A549 (cell line): ENCODE measurements at regions of chr1 and their contacts with region 1.

Region 1: GRCh38 chr1:44631647-44632539 is 42.4 kb downstream of the TMEM53 start:
- DNase-seq: peak; percentile 74 to 83
- ATAC-seq: peak; percentile 84 to 86
- H3K4me3 ChIP-seq: peak overlapping the region; percentile 77
- H3K27ac ChIP-seq: peak overlapping the region; percentile 97
- H3K4me1 ChIP-seq: peaks cover 18% of the 10 kb centered on the region; the same call in 1 of the 3 replicates
- CTCF ChIP-seq: no peak
- EP300 ChIP-seq: no peak
- POLR2A ChIP-seq: peak; percentile 30
- RAD21 ChIP-seq: no peak

Region 2: DNA sequence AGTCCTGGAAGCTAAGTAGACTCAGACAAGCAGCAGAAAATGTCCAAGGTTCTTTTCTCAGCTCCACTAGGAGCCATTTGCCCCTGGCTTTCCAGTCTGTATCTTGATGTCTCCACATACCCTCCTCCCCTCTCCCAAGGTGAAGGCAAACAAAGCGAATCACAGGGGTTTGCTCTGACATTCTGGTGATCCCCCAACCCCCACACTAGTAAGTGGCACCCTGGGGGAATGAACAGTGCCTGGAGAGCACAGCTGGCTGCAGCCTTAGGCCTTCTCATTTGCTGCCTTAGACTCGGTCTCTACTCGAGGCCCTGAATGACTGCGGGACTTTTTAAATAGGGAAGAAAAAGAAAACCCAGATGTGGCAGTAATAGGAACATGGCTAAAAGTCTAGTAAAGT is 292.2 kb before region 1 on chr1:
- CTCF ChIA-PET with region 1: no interaction called
- POLR2A ChIA-PET with region 1: interaction called, 16 read pairs
- DNase-seq: no peak
- ATAC-seq: no peak
- H3K4me3 ChIP-seq: no peak overlapping the region
- H3K27ac ChIP-seq: no peak overlapping the region
- H3K4me1 ChIP-seq: peaks cover 9% of the 10 kb centered on the region; the same call in 2 of the 3 replicates
- CTCF ChIP-seq: no peak
- EP300 ChIP-seq: no peak
- POLR2A ChIP-seq: no peak
- RAD21 ChIP-seq: no peak

Region 3: GRCh38 chr1:44511769-44512168 is 120.1 kb before region 1 on chr1:
- CTCF ChIA-PET with region 1: no interaction called
- POLR2A ChIA-PET with region 1: no interaction called
- DNase-seq: no peak
- ATAC-seq: no peak
- H3K4me3 ChIP-seq: no peak overlapping the region
- H3K27ac ChIP-seq: no peak overlapping the region
- H3K4me1 ChIP-seq: peaks cover 16% of the 10 kb centered on the region; the same call in 2 of the 3 replicates
- CTCF ChIP-seq: no peak
- EP300 ChIP-seq: no peak
- POLR2A ChIP-seq: no peak
- RAD21 ChIP-seq: no peak

Region 4: GRCh38 chr1:44542420-44543063 is 89.4 kb before region 1 on chr1:
- CTCF ChIA-PET with region 1: no interaction called
- POLR2A ChIA-PET with region 1: no interaction called
- DNase-seq: no peak
- ATAC-seq: no peak
- H3K4me3 ChIP-seq: no peak overlapping the region
- H3K27ac ChIP-seq: no peak overlapping the region
- H3K4me1 ChIP-seq: no peaks in the 10 kb centered on the region
- CTCF ChIP-seq: no peak
- EP300 ChIP-seq: no peak
- POLR2A ChIP-seq: no peak
- RAD21 ChIP-seq: no peak

Region 5: GRCh38 chr1:44642255-44642654 is 10.4 kb after region 1 on chr1:
- CTCF ChIA-PET with region 1: interaction called, 8 read pairs
- POLR2A ChIA-PET with region 1: interaction called, 19 read pairs
- DNase-seq: no peak
- ATAC-seq: no peak
- H3K4me3 ChIP-seq: no peak overlapping the region
- H3K27ac ChIP-seq: no peak overlapping the region
- H3K4me1 ChIP-seq: no peaks in the 10 kb centered on the region
- CTCF ChIP-seq: no peak
- EP300 ChIP-seq: no peak
- POLR2A ChIP-seq: no peak
- RAD21 ChIP-seq: no peak